KBM-7 (cell line): ENCODE measurements at regions of chr6 and their contacts with region 1.

Region 1: GRCh38 chr6:132798869-132799538 is 567 bp upstream of the SLC18B1 start:
- DNase-seq: peak; percentile 76

Region 2: DNA sequence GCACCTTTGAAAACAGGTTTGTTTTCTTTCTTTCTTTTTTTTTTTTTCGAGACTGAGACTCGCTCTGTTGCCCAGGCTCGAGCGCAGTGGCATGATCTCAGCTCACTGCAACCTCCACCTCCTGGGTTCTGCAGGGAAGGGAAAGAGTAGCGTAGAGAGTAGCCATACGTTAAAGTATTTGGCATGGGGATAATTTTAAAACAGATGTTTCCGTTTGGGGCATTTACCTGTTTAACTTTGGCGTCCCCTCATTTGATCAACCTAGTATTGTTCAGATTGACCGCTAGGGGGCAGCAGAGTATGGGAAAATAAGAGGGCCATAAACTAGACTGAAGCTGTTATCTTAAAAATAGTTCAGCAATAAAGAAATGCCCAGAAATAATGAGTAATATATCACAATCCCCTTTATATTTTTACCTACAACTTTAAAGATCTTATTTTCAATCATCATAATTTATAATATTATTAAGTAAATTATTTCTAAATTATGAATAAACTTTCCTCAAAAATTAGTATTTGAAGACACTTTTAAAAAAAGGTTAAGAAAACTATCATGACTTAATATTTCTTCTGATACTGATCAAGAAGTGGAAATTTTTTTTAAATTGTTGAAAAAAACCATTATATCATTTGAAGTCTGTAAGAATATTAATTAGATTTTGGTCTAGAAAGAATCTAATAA is 268.6 kb before region 1 on chr6:
- in situ Hi-C with region 1: loop called (anchors 25 kb)
- DNase-seq: peak; percentile 65

Region 3: GRCh38 chr6:132669690-132670291 is 129.2 kb before region 1 on chr6:
- in situ Hi-C with region 1: loop called (anchors 25 kb)
- DNase-seq: peak; percentile 76